Body of pancreas (tissue), 4 donors: ENCODE measurements at regions of chr19 and their contacts with region 1.

Region 1: GRCh38 chr19:28463493-28464053 is 749.4 kb downstream of the UQCRFS1 start:
- DNase-seq: no peak
- ATAC-seq: no peak
- H3K4me3 ChIP-seq: no peak overlapping the region
- H3K27ac ChIP-seq: no peak overlapping the region
- H3K4me1 ChIP-seq: peaks cover 13% of the 10 kb centered on the region
- H3K27me3 ChIP-seq: no peaks in the 10 kb centered on the region
- CTCF ChIP-seq: no peak
- POLR2A ChIP-seq: no peak

Region 2: GRCh38 chr19:28710278-28710677 is 246.7 kb after region 1 on chr19:
- intact Hi-C with region 1: loop called (anchors 5 kb)
- DNase-seq: no peak
- ATAC-seq: peak; percentile 66
- H3K4me3 ChIP-seq: no peak overlapping the region
- H3K27ac ChIP-seq: no peak overlapping the region
- H3K4me1 ChIP-seq: no peaks in the 10 kb centered on the region
- H3K27me3 ChIP-seq: no peaks in the 10 kb centered on the region
- CTCF ChIP-seq: peak; percentile 30 to 83 (median 70)
- POLR2A ChIP-seq: no peak

Region 3: GRCh38 chr19:28878862-28879566 is 415.4 kb after region 1 on chr19:
- intact Hi-C with region 1: no loop called
- DNase-seq: peak; percentile 71 to 81 (median 76)
- ATAC-seq: no peak
- H3K4me3 ChIP-seq: no peak overlapping the region
- H3K27ac ChIP-seq: no peak overlapping the region
- H3K4me1 ChIP-seq: no peaks in the 10 kb centered on the region
- H3K27me3 ChIP-seq: no peaks in the 10 kb centered on the region
- CTCF ChIP-seq: peak; percentile 49 to 84 (median 64)
- POLR2A ChIP-seq: no peak